ENCODE measurements at regions of chr2 and their contacts with region 1.

Region 1: GRCh38 chr2:61538200-61538919 is at the start of gene XPO1:
- DNase-seq: peak; percentile 100
- ATAC-seq: peak; percentile 85
- H3K4me3 Mint-ChIP-seq: peak within 1 kb of the TSS; percentile 95
- H3K27ac Mint-ChIP-seq: peak within 1 kb of the TSS; percentile 100
- H3K4me1 Mint-ChIP-seq: peaks cover 22% of the 10 kb centered on the region
- H3K27me3 Mint-ChIP-seq: no peaks in the 10 kb centered on the region
- total RNA-seq, gene XPO1: 187 to 214 TPM

Region 2: GRCh38 chr2:60756191-60757041 is 781.9 kb before region 1 on chr2 and contains the start of gene PAPOLG:
- CTCF ChIA-PET with region 1: no interaction called
- POLR2A ChIA-PET with region 1: interaction called, 4 read pairs
- intact Hi-C with region 1: loop called in 1 of 2 experiments (anchors 5 kb)
- DNase-seq: peak; percentile 99
- ATAC-seq: peak; percentile 98
- H3K4me3 Mint-ChIP-seq: peak within 1 kb of the TSS; percentile 99
- H3K27ac Mint-ChIP-seq: peak within 1 kb of the TSS; percentile 100
- H3K4me1 Mint-ChIP-seq: peaks cover 34% of the 10 kb centered on the region
- H3K27me3 Mint-ChIP-seq: no peaks in the 10 kb centered on the region
- total RNA-seq, gene PAPOLG: 13.8 to 14.2 TPM

Region 3: DNA sequence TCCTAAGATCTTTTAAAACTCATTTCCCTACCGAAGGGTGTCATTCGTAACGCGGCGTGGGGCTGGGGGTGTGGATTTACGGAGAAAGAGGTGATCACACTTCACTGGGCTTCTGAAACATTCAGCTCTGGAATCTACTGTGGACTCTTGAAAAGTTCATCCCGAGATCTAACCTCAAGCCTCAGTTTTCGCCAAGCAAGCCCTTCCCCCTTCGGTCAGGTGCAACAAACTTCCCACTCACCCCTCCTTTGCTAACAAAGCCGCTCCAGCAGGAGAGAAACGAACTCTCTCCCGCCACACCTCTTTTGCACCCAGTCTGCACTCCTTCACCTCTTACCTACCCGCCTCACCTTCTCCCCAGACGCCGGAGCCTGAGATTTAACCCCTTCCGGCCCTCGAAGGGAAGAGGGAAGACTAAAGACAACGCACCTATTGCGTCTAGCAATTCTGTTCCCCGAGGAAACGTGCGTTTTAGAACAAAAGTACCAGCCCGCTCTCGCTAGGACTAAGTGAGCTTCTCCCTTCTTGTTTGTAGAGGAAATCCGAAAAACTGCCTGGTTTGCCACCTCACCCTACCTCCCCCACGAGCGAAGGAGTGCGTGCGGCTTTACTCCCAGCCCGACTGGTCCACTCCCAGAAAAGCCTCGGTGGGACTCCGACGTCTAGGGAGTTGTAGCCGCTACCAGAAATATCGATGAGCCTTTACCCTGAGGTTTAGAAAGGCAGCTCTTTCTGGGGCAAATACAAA is 521.4 kb before region 1 on chr2:
- CTCF ChIA-PET with region 1: interaction called, 4 read pairs
- POLR2A ChIA-PET with region 1: no interaction called
- intact Hi-C with region 1: loop called in 1 of 2 experiments (anchors 1 kb)
- DNase-seq: peak; percentile 81
- ATAC-seq: peak; percentile 75
- H3K4me3 Mint-ChIP-seq: peak overlapping the region; percentile 98
- H3K27ac Mint-ChIP-seq: peak overlapping the region; percentile 95
- H3K4me1 Mint-ChIP-seq: peaks cover 32% of the 10 kb centered on the region
- H3K27me3 Mint-ChIP-seq: no peaks in the 10 kb centered on the region

Region 4: GRCh38 chr2:61176755-61177726 is 361.3 kb before region 1 on chr2:
- CTCF ChIA-PET with region 1: no interaction called
- POLR2A ChIA-PET with region 1: no interaction called
- intact Hi-C with region 1: loop called (anchors 1 to 2 kb)
- DNase-seq: peak; percentile 97
- ATAC-seq: peak; percentile 90
- H3K4me3 Mint-ChIP-seq: peak overlapping the region; percentile 86
- H3K27ac Mint-ChIP-seq: peak overlapping the region; percentile 76
- H3K4me1 Mint-ChIP-seq: peaks cover 46% of the 10 kb centered on the region
- H3K27me3 Mint-ChIP-seq: no peaks in the 10 kb centered on the region

Region 5: DNA sequence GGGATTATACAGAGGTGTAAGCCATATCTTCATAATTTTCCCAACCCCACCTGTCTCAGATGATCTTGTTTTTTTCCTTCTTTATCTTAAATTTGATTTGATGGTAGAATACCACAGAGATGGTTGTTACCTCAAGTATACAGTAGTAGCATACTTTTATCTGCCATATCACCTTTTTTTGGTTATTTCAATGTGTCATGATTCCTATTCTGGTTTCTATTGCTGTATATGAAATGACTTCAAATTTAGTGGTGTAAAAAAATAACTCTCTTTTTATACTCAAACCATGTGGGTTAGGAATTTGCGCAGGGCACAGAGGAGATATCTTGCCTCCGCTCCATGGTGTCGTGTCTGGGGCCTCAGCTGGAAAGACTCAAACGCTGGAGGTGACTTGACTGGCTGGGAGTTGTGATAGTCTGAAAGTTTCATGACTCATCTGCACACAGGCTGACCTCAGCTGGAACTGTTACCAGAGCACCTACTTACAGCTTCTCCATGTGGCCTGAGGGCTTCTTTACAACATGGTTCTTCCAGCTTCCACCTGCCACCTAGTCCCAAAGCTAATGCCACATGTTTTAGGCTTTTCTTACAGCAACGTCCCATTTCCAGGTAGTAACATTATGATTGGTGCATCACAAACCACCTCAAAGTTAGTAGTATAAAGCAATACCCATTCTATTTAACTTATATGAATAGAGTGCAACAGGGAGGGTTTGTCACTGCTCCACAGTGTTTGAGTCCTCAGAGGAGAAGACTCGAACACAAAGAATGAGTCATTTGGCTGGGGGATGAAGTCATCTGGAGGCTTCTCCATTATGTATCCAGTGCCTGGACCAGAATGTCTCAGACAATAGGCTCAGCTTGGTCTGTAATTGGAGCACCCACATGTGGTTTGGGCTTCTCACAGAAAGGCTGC is 82.1 kb after region 1 on chr2:
- CTCF ChIA-PET with region 1: no interaction called
- POLR2A ChIA-PET with region 1: no interaction called
- intact Hi-C with region 1: loop called in 1 of 2 experiments (anchors 2 kb)
- DNase-seq: peak; percentile 31
- ATAC-seq: peak; percentile 91
- H3K4me3 Mint-ChIP-seq: no peak overlapping the region
- H3K27ac Mint-ChIP-seq: no peak overlapping the region
- H3K4me1 Mint-ChIP-seq: peaks cover 6% of the 10 kb centered on the region
- H3K27me3 Mint-ChIP-seq: no peaks in the 10 kb centered on the region

Region 6: DNA sequence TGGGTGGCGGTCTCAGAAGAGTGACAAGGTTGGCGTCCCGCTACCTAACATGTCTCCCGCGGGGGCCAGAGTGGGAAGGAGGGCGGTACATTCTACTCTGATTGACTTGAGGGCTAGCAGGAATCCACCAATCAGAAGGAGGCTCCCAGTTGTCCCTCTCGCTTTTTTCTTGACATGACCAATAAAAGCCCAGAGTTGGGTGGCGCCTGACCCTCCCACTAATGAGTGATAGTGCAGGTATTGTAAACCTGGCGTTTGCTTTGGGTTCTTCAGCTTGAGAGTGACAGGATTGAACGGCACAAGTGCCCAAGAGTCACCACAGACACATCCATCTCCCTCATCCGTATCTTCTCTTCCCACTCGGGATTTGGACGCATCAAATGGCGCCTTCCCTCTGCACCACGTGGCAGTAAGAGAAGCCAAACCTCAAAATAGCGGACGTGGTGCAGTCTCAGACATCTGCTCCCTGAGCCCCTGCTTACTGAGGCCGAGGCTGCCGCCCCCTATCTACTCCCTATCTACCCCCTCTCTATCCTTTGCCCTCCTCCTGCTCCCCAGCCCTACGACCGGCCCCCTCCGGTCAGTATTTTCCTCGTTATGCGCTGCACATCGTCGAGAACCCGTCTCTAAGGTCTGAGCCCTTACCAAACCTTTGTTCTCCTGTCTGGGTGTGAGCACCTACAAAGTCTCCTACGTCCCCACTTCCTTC is 316.3 kb after region 1 on chr2:
- CTCF ChIA-PET with region 1: interaction called, 4 read pairs
- POLR2A ChIA-PET with region 1: interaction called, 3 read pairs
- intact Hi-C with region 1: loop called (anchors 1 kb)
- DNase-seq: peak; percentile 93
- ATAC-seq: peak; percentile 94
- H3K4me3 Mint-ChIP-seq: peak overlapping the region; percentile 99
- H3K27ac Mint-ChIP-seq: peak overlapping the region; percentile 94
- H3K4me1 Mint-ChIP-seq: peaks cover 20% of the 10 kb centered on the region
- H3K27me3 Mint-ChIP-seq: no peaks in the 10 kb centered on the region

Region 7: GRCh38 chr2:62195421-62196277 is 657.3 kb after region 1 on chr2 and contains the start of gene B3GNT2:
- CTCF ChIA-PET with region 1: no interaction called
- POLR2A ChIA-PET with region 1: interaction called, 3 read pairs
- intact Hi-C with region 1: loop called in 1 of 2 experiments (anchors 2 kb)
- DNase-seq: peak; percentile 92
- ATAC-seq: peak; percentile 62
- H3K4me3 Mint-ChIP-seq: peak within 1 kb of the TSS; percentile 92
- H3K27ac Mint-ChIP-seq: peak within 1 kb of the TSS; percentile 92
- H3K4me1 Mint-ChIP-seq: peaks cover 28% of the 10 kb centered on the region
- H3K27me3 Mint-ChIP-seq: no peaks in the 10 kb centered on the region
- total RNA-seq, gene B3GNT2: 28.6 to 31.7 TPM